Activated CD4-positive, alpha-beta memory T cell treated with anti-CD3 and anti-CD28 coated beads for 36 hours (primary cell): ENCODE measurements at regions of chr1 and their contacts with region 1.

Region 1: DNA sequence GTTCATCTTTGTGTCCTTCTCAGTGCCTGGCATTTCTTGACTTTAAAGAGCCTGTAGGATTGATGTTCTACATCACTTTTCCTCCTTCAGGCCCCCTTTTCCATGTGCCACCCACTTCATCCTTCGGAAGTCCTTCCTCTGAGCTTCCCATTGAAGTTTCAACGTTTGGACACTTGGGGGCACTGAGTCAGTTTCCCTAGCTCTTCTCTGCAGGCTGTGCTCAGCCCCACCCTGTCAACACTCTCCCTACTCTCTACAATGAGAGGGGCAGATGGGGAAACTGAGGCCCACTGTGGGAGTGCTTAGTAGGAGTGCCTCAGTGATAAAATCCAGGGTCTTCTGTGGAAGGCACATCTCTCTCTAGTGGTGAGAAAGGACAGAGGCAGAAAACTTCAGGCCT is 11.9 kb downstream of the KCNJ10 start:
- DNase-seq: no peak
- H3K4me3 Mint-ChIP-seq: no peak overlapping the region
- H3K27ac Mint-ChIP-seq: no peak overlapping the region
- H3K4me1 Mint-ChIP-seq: no peaks in the 10 kb centered on the region
- H3K27me3 Mint-ChIP-seq: peaks cover 30% of the 10 kb centered on the region

Region 2: DNA sequence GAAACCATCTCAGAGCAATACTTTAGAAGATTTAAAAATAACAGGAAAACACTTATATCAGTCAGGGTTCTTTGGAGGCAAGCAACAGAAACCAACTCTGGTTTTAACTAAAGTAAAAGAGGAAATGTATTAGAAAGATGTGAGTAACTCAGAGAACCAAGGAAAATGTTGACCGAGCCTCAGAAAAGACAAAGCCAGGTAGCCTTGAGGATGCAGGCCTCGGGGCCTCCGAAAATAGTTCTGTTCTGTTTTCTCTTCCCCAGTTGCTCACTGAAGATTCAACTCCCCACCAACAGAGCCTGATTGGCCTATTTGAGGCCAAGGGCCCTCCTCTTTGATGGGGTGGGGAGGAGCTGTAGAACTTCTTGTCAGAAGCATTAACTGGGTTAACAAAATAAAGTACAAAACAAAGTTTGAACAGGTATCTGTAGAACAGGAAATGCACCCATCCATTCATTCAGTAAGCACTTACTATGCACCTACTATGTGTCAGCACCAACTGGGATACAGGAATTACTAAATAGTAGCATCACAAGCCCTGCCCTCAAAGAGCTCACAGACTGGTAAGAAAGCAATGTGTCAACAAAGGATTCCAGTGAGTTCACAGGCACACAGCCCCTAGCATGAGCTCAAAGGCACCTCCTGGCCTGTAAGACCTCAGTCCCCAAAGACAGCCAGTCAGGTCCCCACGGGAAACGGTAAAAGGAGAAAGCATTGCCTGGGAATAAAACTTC is 218.8 kb before region 1 on chr1:
- CTCF ChIA-PET with region 1: no interaction called
- POLR2A ChIA-PET with region 1: no interaction called
- intact Hi-C with region 1: no loop called
- DNase-seq: no peak
- H3K4me3 Mint-ChIP-seq: no peak overlapping the region
- H3K27ac Mint-ChIP-seq: peak overlapping the region; percentile 57
- H3K4me1 Mint-ChIP-seq: peaks cover 19% of the 10 kb centered on the region
- H3K27me3 Mint-ChIP-seq: no peaks in the 10 kb centered on the region

Region 3: GRCh38 chr1:160046494-160047110 is 11.5 kb before region 1 on chr1:
- CTCF ChIA-PET with region 1: interaction called, 16 read pairs
- POLR2A ChIA-PET with region 1: no interaction called
- intact Hi-C with region 1: no loop called
- DNase-seq: peak; percentile 61
- H3K4me3 Mint-ChIP-seq: peak overlapping the region; percentile 50
- H3K27ac Mint-ChIP-seq: no peak overlapping the region
- H3K4me1 Mint-ChIP-seq: peaks cover 9% of the 10 kb centered on the region
- H3K27me3 Mint-ChIP-seq: peaks cover 15% of the 10 kb centered on the region